A549 (cell line): ENCODE measurements at regions of chr12 and their contacts with region 1.

Region 1: DNA sequence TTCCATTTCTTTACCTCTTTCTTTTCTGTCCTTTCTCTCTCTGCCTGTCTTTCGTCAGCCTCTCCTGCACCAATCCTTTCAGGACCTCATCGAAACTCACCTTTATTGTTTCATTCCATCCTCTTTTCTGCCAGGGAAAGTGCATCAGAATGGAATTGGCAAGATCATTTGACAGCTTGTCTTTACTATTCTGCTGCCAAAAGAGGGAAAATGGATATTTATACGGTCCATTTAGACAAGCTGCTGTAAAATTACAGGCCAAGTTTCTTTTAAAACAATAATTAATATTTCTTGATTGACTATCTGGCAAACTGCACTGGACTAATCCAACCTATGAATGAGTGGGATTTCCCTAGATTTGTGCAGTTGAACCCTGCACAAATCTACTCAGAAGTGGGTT is 7.6 kb upstream of the SRGAP1 start:
- DNase-seq: no peak
- ATAC-seq: no peak
- H3K4me3 ChIP-seq: no peak overlapping the region
- H3K27ac ChIP-seq: no peak overlapping the region
- H3K4me1 ChIP-seq: no peaks in the 10 kb centered on the region
- CTCF ChIP-seq: no peak
- EP300 ChIP-seq: no peak
- POLR2A ChIP-seq: no peak
- RAD21 ChIP-seq: no peak

Region 2: GRCh38 chr12:63826006-63826585 is 10.8 kb before region 1 on chr12:
- CTCF ChIA-PET with region 1: interaction called, 22 read pairs
- POLR2A ChIA-PET with region 1: no interaction called
- DNase-seq: peak; percentile 72 to 81
- ATAC-seq: peak; percentile 82 to 92
- H3K4me3 ChIP-seq: no peak overlapping the region
- H3K27ac ChIP-seq: no peak overlapping the region
- H3K4me1 ChIP-seq: 0 out of 3 replicates have a peak, but pooled peaks cover 4% of the 10 kb centered on the region
- CTCF ChIP-seq: peak; percentile 95
- EP300 ChIP-seq: no peak
- POLR2A ChIP-seq: no peak
- RAD21 ChIP-seq: peak; percentile 92 to 97

Region 3: GRCh38 chr12:64236549-64236948 is 399.6 kb after region 1 on chr12:
- CTCF ChIA-PET with region 1: interaction called, 20 read pairs
- POLR2A ChIA-PET with region 1: interaction called, 6 read pairs
- DNase-seq: peak in 1 of 2 experiments; percentile 29
- ATAC-seq: peak; percentile 68 to 78; a peak in 5 of 6 replicates
- H3K4me3 ChIP-seq: no peak overlapping the region
- H3K27ac ChIP-seq: no peak overlapping the region
- H3K4me1 ChIP-seq: no peaks in the 10 kb centered on the region
- CTCF ChIP-seq: no peak
- EP300 ChIP-seq: no peak
- POLR2A ChIP-seq: no peak
- RAD21 ChIP-seq: peak; percentile 49 to 62; a peak in 4 of 5 replicates

Region 4: GRCh38 chr12:64243809-64244208 is 406.9 kb after region 1 on chr12:
- CTCF ChIA-PET with region 1: interaction called, 17 read pairs
- POLR2A ChIA-PET with region 1: interaction called, 6 read pairs
- DNase-seq: no peak
- ATAC-seq: no peak
- H3K4me3 ChIP-seq: no peak overlapping the region
- H3K27ac ChIP-seq: no peak overlapping the region
- H3K4me1 ChIP-seq: no peaks in the 10 kb centered on the region
- CTCF ChIP-seq: no peak
- EP300 ChIP-seq: no peak
- POLR2A ChIP-seq: no peak
- RAD21 ChIP-seq: no peak